ENCODE measurements at regions of chr1 and their contacts with region 1.

Region 1: DNA sequence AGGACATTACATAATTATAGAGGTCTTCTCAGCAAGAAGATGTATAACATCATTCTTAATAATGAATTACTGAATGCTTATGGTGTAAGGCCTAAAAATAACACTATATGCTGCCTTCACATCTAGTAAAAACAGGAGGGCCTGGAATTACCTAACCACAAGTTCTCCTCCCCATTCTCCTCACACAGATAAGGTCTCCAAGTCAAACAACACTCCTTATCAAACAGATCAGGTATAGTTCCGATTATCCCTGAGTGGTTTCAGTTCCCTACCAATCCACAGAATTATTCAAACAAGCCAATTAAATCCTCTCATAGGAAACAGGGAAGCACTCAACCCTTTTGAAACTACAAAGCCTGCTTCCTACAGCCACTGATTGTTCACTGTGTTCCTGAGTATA is 4.0 kb upstream of the AGBL4 start:
- DNase-seq: no peak
- CTCF ChIP-seq: no peak

Region 2: GRCh38 chr1:50038237-50038809 is 10.5 kb after region 1 on chr1:
- CTCF ChIA-PET with region 1: interaction called, 10 read pairs
- POLR2A ChIA-PET with region 1: no interaction called
- DNase-seq: no peak
- CTCF ChIP-seq: no peak

Measured in GM10248 (cell line).